Activated T-helper 1 cell treated with anti-CD3 and anti-CD28 coated beads, Interleukin-12 subunit alpha, Interleukin-12 subunit beta, Interleukin-2, Interleukin-4 antibody, amounts not matched to agents 30 ng/mL and 10 ng/mL and 1 ng/mL, durations not matched to agents 14 hours and 24 hours and 36 hours (primary cell): ENCODE measurements at regions of chr2 and their contacts with region 1.

Region 1: DNA sequence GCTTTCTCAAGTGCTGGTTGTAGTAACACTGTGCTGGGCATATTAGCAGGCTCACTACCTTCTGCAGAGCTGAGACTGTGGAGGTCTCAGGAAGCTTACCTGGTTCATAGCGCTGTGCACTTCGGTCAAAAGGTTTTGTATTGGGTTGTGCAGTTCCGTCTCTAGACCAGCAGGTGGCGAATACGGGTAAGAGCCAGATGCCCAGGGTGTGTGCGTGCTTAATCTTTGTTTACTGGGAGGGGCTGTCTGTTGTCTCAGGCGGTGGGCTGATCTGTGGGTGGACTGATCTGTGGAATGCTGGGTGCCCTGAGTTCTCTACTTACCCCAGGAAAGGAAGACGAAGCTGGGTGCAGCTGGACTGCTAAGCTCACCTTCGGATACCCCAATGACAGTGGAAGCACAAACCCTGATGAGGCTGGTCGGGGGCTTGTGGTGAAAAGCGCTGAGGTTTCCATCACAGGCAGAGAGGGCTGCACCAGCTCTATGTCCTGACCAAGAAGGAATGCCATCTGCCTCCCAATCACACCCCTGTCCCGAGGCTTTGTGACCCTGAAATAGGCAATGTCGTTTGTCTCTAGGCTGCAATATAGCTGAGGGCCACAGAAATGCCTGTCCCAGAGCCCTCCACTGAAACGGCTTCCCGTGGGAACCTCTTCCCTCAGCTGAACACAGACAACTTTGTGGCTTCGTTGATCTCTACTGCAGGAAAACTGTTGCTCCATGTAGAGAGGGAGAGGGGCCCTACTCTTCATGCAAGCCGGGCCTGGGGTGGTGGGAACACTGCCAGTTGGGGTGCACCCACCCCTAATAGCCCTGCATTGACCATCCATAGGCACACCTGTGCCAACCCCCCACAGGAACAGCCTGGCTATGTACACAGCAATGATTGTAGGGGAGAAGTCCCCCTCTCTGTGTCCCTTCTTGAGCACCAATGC is 45.9 kb upstream of the FAM117B start:
- DNase-seq: peak; percentile 49
- H3K4me3 Mint-ChIP-seq: no peak overlapping the region
- H3K27ac Mint-ChIP-seq: no peak overlapping the region
- H3K4me1 Mint-ChIP-seq: peaks cover 7% of the 10 kb centered on the region
- H3K27me3 Mint-ChIP-seq: no peaks in the 10 kb centered on the region

Region 2: GRCh38 chr2:202700075-202700901 is 111.4 kb after region 1 on chr2:
- intact Hi-C with region 1: loop called (anchors 2 kb)
- DNase-seq: no peak
- H3K4me3 Mint-ChIP-seq: no peak overlapping the region
- H3K27ac Mint-ChIP-seq: peak overlapping the region; percentile 45
- H3K4me1 Mint-ChIP-seq: peaks cover 39% of the 10 kb centered on the region
- H3K27me3 Mint-ChIP-seq: no peaks in the 10 kb centered on the region

Region 3: DNA sequence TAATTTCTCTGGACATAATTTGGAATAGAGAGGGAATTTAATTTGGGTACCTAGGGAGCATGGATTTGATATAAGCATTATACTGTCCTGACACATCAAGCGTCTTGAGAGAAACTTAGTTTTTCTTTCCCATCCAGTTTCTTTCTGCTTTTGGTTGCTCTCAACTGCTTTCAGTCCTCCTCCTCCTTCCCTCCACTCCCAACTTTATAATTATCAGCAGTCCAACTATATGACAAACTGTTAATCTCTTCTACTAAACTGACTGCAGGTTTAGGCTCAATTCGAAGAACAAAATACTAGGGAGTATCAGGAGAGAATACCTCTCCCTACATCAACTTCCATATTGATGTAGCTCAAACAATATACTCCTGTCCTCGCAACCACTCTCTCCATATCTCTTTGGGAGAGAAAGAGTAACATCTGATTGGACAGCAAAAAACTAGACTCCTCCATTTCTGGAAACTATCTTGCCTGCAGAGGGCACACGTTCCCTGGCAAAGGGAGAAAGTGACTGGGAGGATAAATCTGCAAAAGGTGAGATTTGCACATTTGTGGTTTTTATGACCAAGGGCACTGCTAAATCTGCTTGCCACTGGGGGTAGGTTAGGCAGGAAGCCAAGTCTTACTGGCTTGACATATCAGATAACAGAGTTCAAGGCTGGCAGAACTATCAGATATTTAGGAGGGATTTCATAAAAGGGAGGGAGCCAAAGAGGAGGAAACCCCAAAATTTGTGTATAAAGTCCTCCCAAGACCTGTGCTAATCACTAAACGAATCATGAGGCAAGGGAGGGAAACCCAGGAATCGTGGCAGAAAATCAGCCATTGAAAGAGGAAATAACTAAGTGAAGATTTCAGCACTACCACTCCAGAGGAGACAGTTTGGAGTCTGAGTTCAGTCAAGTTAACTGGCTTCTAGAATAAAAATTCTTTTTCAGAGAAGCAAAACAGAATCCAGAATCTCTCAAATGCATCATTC is 242.6 kb after region 1 on chr2:
- intact Hi-C with region 1: loop called (anchors 1 kb)
- DNase-seq: peak; percentile 11
- H3K4me3 Mint-ChIP-seq: no peak overlapping the region
- H3K27ac Mint-ChIP-seq: no peak overlapping the region
- H3K4me1 Mint-ChIP-seq: peaks cover 10% of the 10 kb centered on the region
- H3K27me3 Mint-ChIP-seq: peaks cover 3% of the 10 kb centered on the region

Region 4: DNA sequence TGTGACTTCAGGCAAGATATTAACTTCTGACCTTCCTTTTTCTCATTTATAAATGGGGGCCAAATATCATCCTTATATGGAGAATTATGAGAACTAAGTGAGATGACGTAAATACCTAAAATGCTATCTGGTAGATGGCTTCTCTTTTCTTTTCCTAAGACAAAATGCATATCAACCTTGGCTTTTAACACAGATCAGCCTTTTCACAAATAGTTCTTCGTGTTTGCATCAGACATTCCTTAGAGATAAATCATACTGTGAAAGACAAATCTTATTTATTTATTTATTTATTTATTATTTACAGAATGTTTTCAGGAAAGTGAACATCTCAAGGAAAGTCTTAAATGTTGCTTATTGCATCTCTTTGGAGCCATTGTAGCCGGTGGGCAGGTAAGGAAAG is 488.5 kb after region 1 on chr2:
- intact Hi-C with region 1: no loop called
- DNase-seq: no peak
- H3K4me3 Mint-ChIP-seq: no peak overlapping the region
- H3K27ac Mint-ChIP-seq: no peak overlapping the region
- H3K4me1 Mint-ChIP-seq: no peaks in the 10 kb centered on the region
- H3K27me3 Mint-ChIP-seq: no peaks in the 10 kb centered on the region

Region 5: DNA sequence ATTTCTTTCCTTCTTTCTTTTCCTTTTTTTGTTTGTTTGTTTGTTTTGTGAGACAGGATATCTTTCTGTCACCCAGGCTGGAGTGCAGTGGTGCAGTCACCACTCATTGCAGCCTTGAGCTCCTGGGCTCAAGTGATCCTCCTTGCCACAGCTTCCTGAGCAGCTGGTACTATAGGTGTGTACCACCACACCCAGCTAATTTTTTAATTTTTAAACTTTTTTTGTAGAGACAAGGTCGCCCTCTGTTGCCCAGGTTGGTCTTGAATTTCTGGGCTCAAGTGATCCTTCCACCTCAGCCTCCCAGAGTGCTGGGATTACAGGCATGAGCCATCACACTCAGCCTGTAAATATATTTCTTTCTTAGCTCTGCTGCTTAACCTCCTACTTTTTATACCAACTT is 566.5 kb after region 1 on chr2:
- intact Hi-C with region 1: loop called (anchors 1 kb)
- DNase-seq: no peak
- H3K4me3 Mint-ChIP-seq: no peak overlapping the region
- H3K27ac Mint-ChIP-seq: no peak overlapping the region
- H3K4me1 Mint-ChIP-seq: peaks cover 8% of the 10 kb centered on the region
- H3K27me3 Mint-ChIP-seq: no peaks in the 10 kb centered on the region